Dorsolateral prefrontal cortex (tissue), 120 donors: ENCODE measurements at regions of chrX and their contacts with region 1.

Region 1: GRCh38 chrX:101617211-101618191 is at the start of gene ARMCX6:
- DNase-seq: peak; percentile 75 to 87 (median 82)
- H3K4me3 ChIP-seq: peak within 1 kb of the TSS; percentile 25 to 83 (median 68)
- H3K27ac ChIP-seq: peak within 1 kb of the TSS in 55 of 59 donors; percentile 8 to 89 (median 74)
- H3K27me3 ChIP-seq: peaks cover 0 to 45% (median 9%) of the 10 kb centered on the region in 45 donors
- CTCF ChIP-seq: peak in 52 of 56 donors; percentile 13 to 63 (median 43)
- total RNA-seq, gene ARMCX6: 14.4 to 32.3 (median 23.9) TPM

Region 2: DNA sequence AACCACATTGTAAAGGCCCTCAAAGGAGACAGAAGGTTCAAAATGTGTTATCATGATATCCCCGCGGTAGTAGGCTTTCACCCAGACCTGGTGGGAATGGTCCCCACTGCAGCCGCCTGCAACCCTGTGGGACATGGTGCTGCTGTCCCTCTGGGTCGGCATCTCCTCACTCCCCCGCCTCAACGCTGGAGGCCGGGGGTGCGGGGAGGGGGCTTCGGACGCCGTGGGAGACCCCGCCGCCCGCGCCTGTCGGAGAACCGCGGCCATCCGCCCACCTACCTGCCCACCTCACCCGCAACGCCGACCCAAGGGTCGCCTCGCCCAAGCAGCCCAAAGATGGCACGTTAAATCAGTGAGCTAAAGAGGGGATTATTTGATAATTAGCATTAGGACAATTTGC is 78.4 kb before region 1 on chrX:
- intact Hi-C with region 1: no loop called
- DNase-seq: no peak
- H3K4me3 ChIP-seq: no peak overlapping the region
- H3K27ac ChIP-seq: no peak overlapping the region
- H3K27me3 ChIP-seq: peaks cover 0 to 16% (median 0%) of the 10 kb centered on the region in 45 donors
- CTCF ChIP-seq: no peak

Region 3: GRCh38 chrX:101602077-101602476 is 15.4 kb before region 1 on chrX:
- intact Hi-C with region 1: no loop called
- DNase-seq: no peak
- H3K4me3 ChIP-seq: no peak overlapping the region
- H3K27ac ChIP-seq: no peak overlapping the region
- H3K27me3 ChIP-seq: peaks cover 0 to 31% (median 3%) of the 10 kb centered on the region in 45 donors
- CTCF ChIP-seq: no peak

Region 4: DNA sequence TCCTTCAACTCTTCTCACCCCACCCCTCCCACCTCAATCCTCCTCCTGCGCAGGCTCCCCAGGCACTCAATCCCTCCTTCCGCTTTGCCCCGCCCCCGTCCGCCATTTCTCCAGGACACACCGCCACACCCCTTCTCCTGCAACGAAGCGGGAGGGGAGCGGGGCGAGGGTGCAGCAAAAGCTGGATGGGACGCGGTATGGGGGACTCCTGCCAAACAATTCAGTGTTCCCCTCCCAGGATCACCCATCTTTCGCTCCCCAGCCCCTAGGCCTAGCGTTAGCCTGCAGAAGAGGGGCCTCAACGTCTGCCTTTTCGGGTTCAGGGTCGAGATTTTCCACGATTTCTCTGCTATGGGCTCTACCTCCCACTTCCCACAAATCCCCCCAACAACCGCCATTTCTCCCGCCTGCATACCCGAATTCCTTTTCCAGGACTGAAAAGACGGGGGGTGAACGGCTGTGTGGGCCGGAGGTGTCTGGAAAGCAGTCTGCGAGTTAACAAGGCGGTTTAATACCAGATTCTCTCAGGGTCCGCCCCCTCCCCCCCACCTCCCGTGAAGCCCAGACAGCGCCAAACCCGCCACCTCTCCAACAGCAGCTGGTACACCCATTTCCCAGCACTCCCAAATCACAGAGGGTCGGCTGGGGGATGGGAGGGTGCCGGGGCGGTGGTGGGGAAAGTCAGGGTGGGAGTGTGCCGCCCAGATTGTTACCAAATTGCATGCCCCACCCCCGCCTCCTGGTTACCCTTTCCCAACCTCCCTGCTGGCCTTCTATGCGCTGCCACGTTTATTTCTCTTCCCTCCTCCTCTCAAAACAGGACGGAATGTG is 41.4 kb after region 1 on chrX:
- intact Hi-C with region 1: loop called in 1 of 2 experiments (anchors 5 kb)
- DNase-seq: peak; percentile 50 to 77 (median 72)
- H3K4me3 ChIP-seq: peak overlapping the region; percentile 38 to 76 (median 63)
- H3K27ac ChIP-seq: peak overlapping the region in 57 of 59 donors; percentile 7 to 93 (median 77)
- H3K27me3 ChIP-seq: peaks cover 0 to 70% (median 14%) of the 10 kb centered on the region in 45 donors
- CTCF ChIP-seq: no peak

Region 5: GRCh38 chrX:101813200-101813599 is 195.7 kb after region 1 on chrX:
- intact Hi-C with region 1: no loop called
- DNase-seq: no peak
- H3K4me3 ChIP-seq: no peak overlapping the region
- H3K27ac ChIP-seq: no peak overlapping the region
- H3K27me3 ChIP-seq: peaks cover 0 to 36% (median 7%) of the 10 kb centered on the region in 45 donors
- CTCF ChIP-seq: no peak